ENCODE measurements at regions of chr1 and their contacts with region 1.

Region 1: GRCh38 chr1:78114034-78114956 is 68.5 kb downstream of the GIPC2 start:
- DNase-seq: no peak
- H3K4me3 ChIP-seq: no peak overlapping the region
- H3K27ac ChIP-seq: peak overlapping the region; percentile 17 to 54 (median 36)
- H3K4me1 ChIP-seq: peaks cover 5 to 9% (median 7%) of the 10 kb centered on the region in 4 donors
- H3K27me3 ChIP-seq: no peaks in the 10 kb centered on the region
- CTCF ChIP-seq: peak; percentile 88 to 97 (median 89)
- EP300 ChIP-seq: no peak
- POLR2A ChIP-seq: no peak

Region 2: GRCh38 chr1:77817368-77818209 is 296.7 kb before region 1 on chr1:
- intact Hi-C with region 1: loop called (anchors 10 kb)
- DNase-seq: no peak
- H3K4me3 ChIP-seq: no peak overlapping the region
- H3K27ac ChIP-seq: no peak overlapping the region
- H3K4me1 ChIP-seq: no peaks in the 10 kb centered on the region
- H3K27me3 ChIP-seq: no peaks in the 10 kb centered on the region
- CTCF ChIP-seq: no peak
- EP300 ChIP-seq: no peak
- POLR2A ChIP-seq: no peak